ENCODE measurements at regions of chr6 and their contacts with region 1.

Region 1: DNA sequence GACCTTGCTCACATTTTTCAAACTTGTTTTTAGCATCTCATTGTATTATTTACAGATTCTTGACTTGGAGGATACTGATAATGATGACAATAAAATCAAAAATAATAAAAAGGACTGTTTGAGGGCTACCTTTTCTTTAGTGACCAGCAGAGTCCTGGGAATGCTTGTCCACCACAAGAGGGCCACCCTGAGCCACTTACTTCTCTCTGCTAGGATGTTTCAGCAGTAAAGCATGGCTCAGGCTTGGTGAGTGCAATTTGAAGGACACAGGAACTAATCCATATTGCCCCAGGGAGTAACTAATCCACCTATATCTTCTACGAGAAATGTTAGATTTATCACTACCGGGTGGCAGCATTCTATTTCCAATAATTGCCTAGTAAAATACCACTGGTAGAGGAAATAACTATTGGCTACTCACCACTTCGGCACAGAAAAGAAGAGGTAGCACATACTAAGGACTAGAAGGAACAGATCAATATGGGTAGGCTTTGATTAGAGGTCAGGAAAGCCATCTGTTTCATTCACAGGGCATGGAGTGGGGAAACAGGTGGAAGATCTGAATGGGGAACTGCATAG is 5.8 kb upstream of the KIAA0408 start:
- DNase-seq: peak; percentile 54
- ATAC-seq: peak; percentile 94

Region 2: GRCh38 chr6:127539272-127539671 is 74.3 kb after region 1 on chr6:
- intact Hi-C with region 1: loop called (anchors 2 kb)
- DNase-seq: no peak
- ATAC-seq: no peak

Measured in Right ventricle myocardium superior (tissue), 1 donor.